Activated CD4-positive, alpha-beta T cell treated with anti-CD3 and anti-CD28 coated beads for 36 hours (primary cell): ENCODE measurements at regions of chr12 and their contacts with region 1.

Region 1: GRCh38 chr12:52050761-52051541 is at the start of gene NR4A1:
- DNase-seq: peak; percentile 100
- ATAC-seq: peak; percentile 88
- H3K4me3 Mint-ChIP-seq: peak within 1 kb of the TSS; percentile 92
- H3K27ac Mint-ChIP-seq: peak within 1 kb of the TSS; percentile 91
- H3K4me1 Mint-ChIP-seq: peaks cover 38% of the 10 kb centered on the region
- H3K27me3 Mint-ChIP-seq: no peaks in the 10 kb centered on the region
- total RNA-seq, gene NR4A1: 69.4 to 72.8 TPM

Region 2: DNA sequence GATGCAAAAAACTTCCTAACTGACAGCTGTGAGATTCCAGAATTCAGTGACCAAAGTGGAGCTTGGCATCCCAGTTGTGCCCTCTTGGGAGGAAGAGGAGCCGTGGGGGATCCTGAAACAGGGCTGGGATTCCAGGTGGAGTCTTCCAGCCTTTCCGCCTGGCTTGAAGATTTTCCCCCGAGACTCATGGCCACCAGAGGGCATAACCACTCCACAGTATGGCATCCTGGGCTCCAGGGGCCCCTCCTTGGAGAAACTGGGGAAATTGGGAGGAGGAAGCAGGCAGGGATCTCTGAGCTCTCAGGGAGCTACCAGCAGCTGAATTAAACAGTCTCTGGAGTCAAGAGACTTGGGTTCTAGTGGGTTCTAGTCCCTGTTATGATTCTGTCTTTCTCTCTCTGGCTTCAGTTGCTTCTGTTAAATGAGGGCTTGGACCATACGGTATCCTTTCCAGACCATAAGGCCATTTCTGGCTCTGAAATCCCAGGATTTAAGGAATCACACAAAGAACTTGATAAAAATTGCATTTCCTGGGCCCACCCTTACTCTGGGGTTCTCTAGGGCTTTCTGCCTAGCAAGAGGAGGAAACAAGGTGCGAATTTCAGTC is 46.8 kb before region 1 on chr12:
- CTCF ChIA-PET with region 1: no interaction called
- POLR2A ChIA-PET with region 1: interaction called, 6 read pairs
- intact Hi-C with region 1: loop called (anchors 1 kb)
- DNase-seq: peak; percentile 43
- ATAC-seq: no peak
- H3K4me3 Mint-ChIP-seq: no peak overlapping the region
- H3K27ac Mint-ChIP-seq: no peak overlapping the region
- H3K4me1 Mint-ChIP-seq: peaks cover 13% of the 10 kb centered on the region
- H3K27me3 Mint-ChIP-seq: peaks cover 4% of the 10 kb centered on the region

Region 3: DNA sequence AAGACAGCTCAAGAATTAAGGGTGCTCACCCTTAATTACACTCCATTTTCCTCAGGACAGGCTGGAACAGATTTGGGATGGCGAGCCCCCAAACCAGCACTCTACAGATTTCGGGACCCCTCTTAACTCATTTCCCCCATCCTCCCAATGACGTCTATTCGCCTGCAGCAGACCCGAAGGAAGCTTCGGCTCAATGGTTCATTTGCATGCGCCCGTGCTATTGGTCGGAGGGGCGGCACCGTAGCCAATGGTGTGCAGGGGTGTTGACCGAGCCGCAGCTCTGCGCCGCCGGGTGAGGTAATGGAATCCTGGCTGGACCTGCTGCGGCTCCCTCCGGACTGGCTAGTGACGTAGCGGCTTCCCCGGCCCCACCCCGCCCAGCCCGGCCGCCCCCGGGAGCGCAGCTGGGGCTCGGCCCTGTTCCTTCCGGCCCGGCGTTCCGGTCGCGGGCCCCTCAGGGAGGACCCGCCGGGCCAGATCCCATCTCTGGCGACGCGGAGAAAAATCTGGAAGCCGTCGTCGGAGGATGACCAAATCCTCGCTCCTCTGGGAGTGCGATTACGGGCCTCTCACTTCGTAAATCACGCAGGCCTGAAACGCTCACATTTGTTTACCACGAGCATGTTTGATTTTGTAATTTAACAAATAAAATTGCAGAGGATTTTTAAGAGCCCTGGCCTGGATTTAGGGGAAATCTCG is 18.0 kb before region 1 on chr12:
- CTCF ChIA-PET with region 1: interaction called, 11 read pairs
- POLR2A ChIA-PET with region 1: interaction called, 12 read pairs
- intact Hi-C with region 1: loop called (anchors 1 kb)
- DNase-seq: peak; percentile 95
- ATAC-seq: peak; percentile 98
- H3K4me3 Mint-ChIP-seq: peak overlapping the region; percentile 70
- H3K27ac Mint-ChIP-seq: peak overlapping the region; percentile 84
- H3K4me1 Mint-ChIP-seq: peaks cover 42% of the 10 kb centered on the region
- H3K27me3 Mint-ChIP-seq: no peaks in the 10 kb centered on the region

Region 4: DNA sequence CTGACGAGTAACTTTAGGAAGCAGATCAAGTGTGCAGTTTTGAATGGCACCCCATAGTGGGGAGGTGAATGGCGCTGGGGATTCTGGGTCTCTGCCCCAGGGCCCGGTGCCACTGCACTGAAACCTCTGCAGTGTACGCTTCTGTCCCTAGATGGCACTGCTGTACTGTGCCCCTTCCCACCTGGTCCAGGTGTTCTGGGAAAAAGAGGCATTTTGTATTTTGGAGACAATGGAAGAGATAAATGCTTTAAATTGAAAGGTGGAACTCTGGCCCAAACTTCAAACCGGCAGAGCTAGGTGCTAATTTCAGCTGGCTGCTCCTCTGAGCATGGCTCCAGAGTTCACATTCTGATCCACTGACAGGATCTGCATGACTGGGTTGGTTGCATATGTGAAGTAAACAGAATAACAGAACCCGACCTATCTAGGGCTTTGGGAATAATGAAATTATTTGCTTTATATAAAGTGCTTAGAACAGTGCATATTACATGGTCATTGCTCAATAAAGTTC is 88.7 kb after region 1 on chr12:
- CTCF ChIA-PET with region 1: no interaction called
- POLR2A ChIA-PET with region 1: no interaction called
- intact Hi-C with region 1: no loop called
- DNase-seq: peak; percentile 70
- ATAC-seq: peak; percentile 96
- H3K4me3 Mint-ChIP-seq: no peak overlapping the region
- H3K27ac Mint-ChIP-seq: no peak overlapping the region
- H3K4me1 Mint-ChIP-seq: no peaks in the 10 kb centered on the region
- H3K27me3 Mint-ChIP-seq: peaks cover 2% of the 10 kb centered on the region